Activated CD4-positive, alpha-beta T cell treated with anti-CD3 and anti-CD28 coated beads, Interleukin-2, amount 10 ng/mL, durations not matched to agents 24 days and 14 days (primary cell): ENCODE measurements at regions of chr22 and their contacts with region 1.

Region 1: DNA sequence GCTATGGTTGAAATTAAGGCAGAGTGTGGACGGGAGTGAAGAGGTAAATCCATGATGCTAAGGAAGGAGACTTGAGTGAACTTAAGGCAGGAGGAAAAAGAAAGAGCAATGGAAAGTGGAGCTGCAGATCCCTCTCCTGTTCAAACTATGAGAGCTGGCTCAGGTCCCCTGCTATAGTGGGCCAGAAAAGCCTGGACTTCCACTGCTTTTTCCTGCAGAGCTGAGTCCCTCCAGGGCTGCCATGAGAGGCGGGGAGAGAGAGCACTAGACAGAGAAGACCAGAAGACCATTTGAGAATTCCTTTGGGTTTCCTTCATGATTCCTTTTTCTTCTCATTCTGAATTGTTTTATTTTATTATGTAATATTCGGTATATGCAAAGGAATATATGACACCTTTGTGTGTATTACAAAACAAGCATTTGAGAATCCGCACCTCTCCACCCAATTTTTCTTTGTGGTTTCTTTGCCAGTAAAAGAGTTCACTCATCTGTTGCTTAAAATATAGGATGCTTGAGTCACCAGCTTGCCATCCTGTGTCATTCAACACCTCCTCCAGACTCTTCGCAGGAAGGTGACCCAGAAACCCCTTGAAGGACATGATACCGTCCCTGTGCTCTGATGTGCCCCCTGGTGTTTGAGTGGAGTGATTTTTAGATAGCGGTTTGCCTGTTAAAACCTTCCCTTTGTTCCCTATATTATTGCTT is 24.4 kb downstream of the SREBF2 start:
- DNase-seq: peak; percentile 91
- H3K4me3 Mint-ChIP-seq: peak overlapping the region; percentile 60
- H3K27ac Mint-ChIP-seq: peak overlapping the region; percentile 96
- H3K4me1 Mint-ChIP-seq: peaks cover 64% of the 10 kb centered on the region
- H3K27me3 Mint-ChIP-seq: no peaks in the 10 kb centered on the region

Region 2: DNA sequence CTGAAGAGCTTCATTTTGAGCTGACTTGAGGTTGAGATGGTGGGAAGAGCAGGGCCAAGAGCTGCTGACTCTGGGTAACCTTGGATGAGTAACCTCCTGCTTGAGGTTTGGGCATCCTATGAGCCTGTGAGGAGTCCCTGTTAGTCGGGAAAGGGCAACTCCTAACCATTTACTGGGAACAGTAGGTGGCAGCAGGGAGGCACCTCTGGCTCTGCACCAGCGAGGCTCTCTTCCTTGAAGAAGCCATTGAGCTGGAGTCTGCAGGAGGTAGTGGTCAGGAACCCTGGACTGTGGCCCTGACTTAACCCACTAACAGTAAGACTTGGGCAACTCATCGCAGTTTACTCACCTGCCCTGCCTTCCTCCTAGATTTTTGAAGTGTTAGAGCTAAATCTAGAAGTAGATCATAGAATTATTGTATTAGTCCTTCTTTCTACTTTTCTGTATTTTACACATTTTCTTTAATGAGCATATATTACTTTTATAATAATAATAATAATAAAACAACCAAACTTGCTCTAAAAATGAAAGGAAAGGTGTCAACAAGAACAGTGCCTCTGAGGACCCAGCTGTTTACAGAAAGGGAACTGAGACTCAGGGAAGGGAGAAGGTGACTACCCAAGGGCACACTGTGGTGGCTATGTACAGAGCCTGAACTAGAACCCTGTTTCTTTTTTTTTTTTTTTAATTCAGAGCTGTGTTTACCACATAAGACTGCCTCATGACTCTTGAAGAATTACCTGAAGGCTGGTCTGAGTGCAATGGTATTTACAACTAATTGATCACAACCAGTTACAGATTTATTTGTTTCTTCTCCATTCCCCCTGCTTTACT is 110.5 kb before region 1 on chr22:
- intact Hi-C with region 1: loop called (anchors 5 kb)
- DNase-seq: peak; percentile 88
- H3K4me3 Mint-ChIP-seq: no peak overlapping the region
- H3K27ac Mint-ChIP-seq: no peak overlapping the region
- H3K4me1 Mint-ChIP-seq: peaks cover 6% of the 10 kb centered on the region
- H3K27me3 Mint-ChIP-seq: peaks cover 41% of the 10 kb centered on the region

Region 3: DNA sequence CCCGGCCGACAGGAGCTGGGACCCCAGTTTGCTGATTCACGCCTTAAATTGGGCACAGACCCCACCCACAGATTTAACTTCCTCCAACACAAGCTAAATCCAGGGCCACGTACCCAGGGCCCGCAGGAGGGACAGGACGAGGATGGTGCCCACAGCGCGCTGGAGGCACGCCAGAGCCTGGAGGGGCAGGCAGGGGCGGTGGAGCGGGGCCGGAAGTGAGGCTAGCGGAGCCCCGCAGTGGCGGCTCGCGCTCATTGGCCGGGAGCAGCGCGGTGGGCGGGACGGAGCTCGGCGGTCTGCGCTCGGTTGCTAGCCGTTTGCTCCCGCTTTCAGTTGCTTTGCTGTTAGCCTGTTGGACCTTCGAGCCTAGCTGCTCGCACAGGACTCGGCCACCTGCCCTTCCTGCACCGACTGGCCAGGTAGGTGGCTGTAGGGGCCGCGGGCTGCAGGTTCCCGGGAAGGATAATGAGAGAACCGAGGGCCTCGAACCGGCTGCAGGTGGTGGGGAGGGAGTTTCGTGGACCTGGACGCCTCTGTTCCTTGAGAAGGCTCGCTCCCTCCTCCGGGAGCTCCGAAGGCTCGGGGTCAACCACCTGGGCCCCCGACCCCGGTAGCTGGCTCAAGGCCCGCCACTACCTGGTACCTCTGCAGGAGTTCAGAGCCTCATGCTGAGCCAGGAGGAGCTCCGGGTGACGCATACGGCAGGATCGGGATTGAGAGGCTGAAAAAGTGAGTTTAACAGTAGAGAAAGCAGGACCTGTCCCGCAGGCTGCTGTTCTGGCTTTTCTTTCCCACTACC is 56.8 kb before region 1 on chr22 and contains the start of gene CCDC134:
- intact Hi-C with region 1: loop called (anchors 2 kb)
- DNase-seq: peak; percentile 98
- H3K4me3 Mint-ChIP-seq: peak within 1 kb of the TSS; percentile 94
- H3K27ac Mint-ChIP-seq: peak within 1 kb of the TSS; percentile 97
- H3K4me1 Mint-ChIP-seq: peaks cover 39% of the 10 kb centered on the region
- H3K27me3 Mint-ChIP-seq: no peaks in the 10 kb centered on the region
- total RNA-seq, gene CCDC134: 19.7 TPM in 2 replicates

Region 4: GRCh38 chr22:41832553-41833368 is 24.5 kb before region 1 on chr22 and contains the start of gene SREBF2:
- intact Hi-C with region 1: loop called (anchors 1 kb)
- DNase-seq: peak; percentile 99
- H3K4me3 Mint-ChIP-seq: peak within 1 kb of the TSS; percentile 99
- H3K27ac Mint-ChIP-seq: peak within 1 kb of the TSS; percentile 99
- H3K4me1 Mint-ChIP-seq: peaks cover 51% of the 10 kb centered on the region
- H3K27me3 Mint-ChIP-seq: peaks cover 2% of the 10 kb centered on the region
- total RNA-seq, gene SREBF2: 209 and 218 TPM in 2 replicates

Region 5: DNA sequence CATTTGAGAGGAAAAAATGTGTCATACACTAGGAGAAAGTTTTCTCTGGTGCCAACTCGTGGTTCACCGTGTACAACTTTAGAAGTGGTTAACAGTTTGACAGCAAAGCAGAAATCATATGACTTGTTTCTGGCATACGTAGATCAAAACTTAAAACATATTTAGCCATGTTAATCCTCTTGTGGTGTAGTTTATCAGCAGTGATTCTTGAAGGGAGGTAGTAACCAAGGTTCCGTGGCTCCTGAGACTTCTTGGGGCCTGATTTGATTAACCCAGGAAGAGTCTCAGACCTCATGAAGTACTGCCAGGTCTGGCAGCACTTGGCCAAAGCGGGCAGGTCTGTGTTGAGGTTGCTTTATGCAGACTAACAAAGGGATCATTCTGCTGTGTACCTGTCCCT is 16.1 kb after region 1 on chr22:
- intact Hi-C with region 1: loop called (anchors 1 kb)
- DNase-seq: peak; percentile 71
- H3K4me3 Mint-ChIP-seq: peak overlapping the region; percentile 75
- H3K27ac Mint-ChIP-seq: peak overlapping the region; percentile 96
- H3K4me1 Mint-ChIP-seq: peaks cover 42% of the 10 kb centered on the region
- H3K27me3 Mint-ChIP-seq: no peaks in the 10 kb centered on the region

Region 6: GRCh38 chr22:42134100-42135020 is 277.1 kb after region 1 on chr22:
- intact Hi-C with region 1: no loop called
- DNase-seq: no peak
- H3K4me3 Mint-ChIP-seq: no peak overlapping the region
- H3K27ac Mint-ChIP-seq: no peak overlapping the region
- H3K4me1 Mint-ChIP-seq: no peaks in the 10 kb centered on the region
- H3K27me3 Mint-ChIP-seq: no peaks in the 10 kb centered on the region